Activated B cell treated with CpG ODN at 0.5 μM for 24 hours (primary cell): ENCODE measurements at regions of chr22 and their contacts with region 1.

Region 1: GRCh38 chr22:25202290-25202921 is 2.7 kb downstream of the CRYBB3 start:
- DNase-seq: peak; percentile 26
- ATAC-seq: peak; percentile 47
- H3K4me3 Mint-ChIP-seq: no peak overlapping the region
- H3K27ac Mint-ChIP-seq: no peak overlapping the region
- H3K4me1 Mint-ChIP-seq: no peaks in the 10 kb centered on the region
- H3K27me3 Mint-ChIP-seq: peaks cover 4% of the 10 kb centered on the region
- CTCF ChIP-seq: peak; percentile 56

Region 2: DNA sequence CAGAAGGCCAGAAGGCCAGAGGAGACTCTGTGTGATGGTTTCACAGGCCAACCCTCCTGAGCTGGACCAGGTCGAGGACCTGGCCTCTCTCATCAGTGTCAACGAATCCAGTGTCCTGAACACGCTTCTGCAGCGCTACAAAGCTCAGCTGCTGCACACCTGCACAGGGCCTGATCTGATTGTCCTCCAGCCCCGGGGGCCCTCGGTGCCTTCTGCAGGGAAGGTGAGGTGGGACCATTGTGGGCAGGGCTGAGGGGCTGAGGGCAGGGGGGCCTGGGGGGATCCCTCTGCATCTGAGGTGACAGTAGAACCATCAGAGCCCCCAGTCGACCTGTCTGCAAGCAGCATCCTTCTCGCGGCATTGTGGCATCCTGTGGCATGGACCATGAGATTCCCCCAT is 569.9 kb after region 1 on chr22:
- CTCF ChIA-PET with region 1: interaction called, 3 read pairs
- POLR2A ChIA-PET with region 1: no interaction called
- intact Hi-C with region 1: loop called (anchors 2 kb)
- DNase-seq: no peak
- ATAC-seq: no peak
- H3K4me3 Mint-ChIP-seq: no peak overlapping the region
- H3K27ac Mint-ChIP-seq: no peak overlapping the region
- H3K4me1 Mint-ChIP-seq: peaks cover 12% of the 10 kb centered on the region
- H3K27me3 Mint-ChIP-seq: peaks cover 2% of the 10 kb centered on the region
- CTCF ChIP-seq: no peak